Activated CD8-positive, alpha-beta T cell treated with anti-CD3 and anti-CD28 coated beads for 36 hours (primary cell): ENCODE measurements at regions of chr17 and their contacts with region 1.

Region 1: GRCh38 chr17:29533976-29534375 is 32.9 kb downstream of the ABHD15 start:
- DNase-seq: no peak
- ATAC-seq: no peak
- H3K4me3 Mint-ChIP-seq: no peak overlapping the region
- H3K27ac Mint-ChIP-seq: peak overlapping the region; percentile 14
- H3K4me1 Mint-ChIP-seq: no peaks in the 10 kb centered on the region
- H3K27me3 Mint-ChIP-seq: no peaks in the 10 kb centered on the region
- CTCF ChIP-seq: no peak

Region 2: DNA sequence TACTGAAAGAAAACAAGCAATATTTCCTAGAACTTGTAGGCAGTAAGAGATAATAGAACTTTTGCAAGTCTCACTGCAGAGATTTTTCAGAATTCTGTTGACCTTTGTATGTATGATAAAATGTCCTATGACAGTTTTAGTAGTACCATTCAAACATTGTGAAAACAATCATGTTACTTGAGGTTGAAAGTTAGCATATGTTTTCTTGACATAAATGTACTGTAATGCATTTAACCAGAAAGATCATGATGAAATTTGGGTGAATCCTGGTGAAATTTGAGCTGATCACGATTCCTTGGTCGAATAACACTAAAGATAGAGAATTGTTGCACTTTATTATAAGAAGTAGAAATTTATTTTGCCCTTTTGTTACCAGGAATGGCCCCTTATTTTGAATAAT is 58.1 kb before region 1 on chr17:
- CTCF ChIA-PET with region 1: interaction called, 11 read pairs
- POLR2A ChIA-PET with region 1: no interaction called
- intact Hi-C with region 1: no loop called
- DNase-seq: no peak
- ATAC-seq: no peak
- H3K4me3 Mint-ChIP-seq: no peak overlapping the region
- H3K27ac Mint-ChIP-seq: no peak overlapping the region
- H3K4me1 Mint-ChIP-seq: no peaks in the 10 kb centered on the region
- H3K27me3 Mint-ChIP-seq: no peaks in the 10 kb centered on the region
- CTCF ChIP-seq: no peak

Region 3: GRCh38 chr17:29514792-29515191 is 19.2 kb before region 1 on chr17:
- CTCF ChIA-PET with region 1: interaction called, 10 read pairs
- POLR2A ChIA-PET with region 1: no interaction called
- intact Hi-C with region 1: no loop called
- DNase-seq: no peak
- ATAC-seq: no peak
- H3K4me3 Mint-ChIP-seq: no peak overlapping the region
- H3K27ac Mint-ChIP-seq: no peak overlapping the region
- H3K4me1 Mint-ChIP-seq: no peaks in the 10 kb centered on the region
- H3K27me3 Mint-ChIP-seq: no peaks in the 10 kb centered on the region
- CTCF ChIP-seq: no peak